ENCODE measurements at regions of chr14 and their contacts with region 1.

Region 1: GRCh38 chr14:54572316-54572715 is 5.4 kb downstream of the SAMD4A start:
- DNase-seq: no peak
- ATAC-seq: peak; percentile 34
- H3K4me3 ChIP-seq: no peak overlapping the region
- H3K27ac ChIP-seq: no peak overlapping the region
- H3K4me1 ChIP-seq: peaks cover 24% of the 10 kb centered on the region
- H3K27me3 ChIP-seq: no peaks in the 10 kb centered on the region
- CTCF ChIP-seq: peak; percentile 51

Region 2: GRCh38 chr14:54642801-54643697 is 70.7 kb after region 1 on chr14:
- intact Hi-C with region 1: loop called (anchors 10 kb)
- DNase-seq: no peak
- ATAC-seq: peak; percentile 39
- H3K4me3 ChIP-seq: no peak overlapping the region
- H3K27ac ChIP-seq: no peak overlapping the region
- H3K4me1 ChIP-seq: peaks cover 7% of the 10 kb centered on the region
- H3K27me3 ChIP-seq: no peaks in the 10 kb centered on the region
- CTCF ChIP-seq: peak; percentile 26

Region 3: GRCh38 chr14:54691525-54692283 is 119.4 kb after region 1 on chr14:
- intact Hi-C with region 1: loop called (anchors 5 kb)
- DNase-seq: peak; percentile 83
- ATAC-seq: peak; percentile 95
- H3K4me3 ChIP-seq: no peak overlapping the region
- H3K27ac ChIP-seq: peak overlapping the region; percentile 32
- H3K4me1 ChIP-seq: peaks cover 23% of the 10 kb centered on the region
- H3K27me3 ChIP-seq: no peaks in the 10 kb centered on the region
- CTCF ChIP-seq: peak; percentile 88